ENCODE measurements at regions of chr17 and their contacts with region 1.

Region 1: DNA sequence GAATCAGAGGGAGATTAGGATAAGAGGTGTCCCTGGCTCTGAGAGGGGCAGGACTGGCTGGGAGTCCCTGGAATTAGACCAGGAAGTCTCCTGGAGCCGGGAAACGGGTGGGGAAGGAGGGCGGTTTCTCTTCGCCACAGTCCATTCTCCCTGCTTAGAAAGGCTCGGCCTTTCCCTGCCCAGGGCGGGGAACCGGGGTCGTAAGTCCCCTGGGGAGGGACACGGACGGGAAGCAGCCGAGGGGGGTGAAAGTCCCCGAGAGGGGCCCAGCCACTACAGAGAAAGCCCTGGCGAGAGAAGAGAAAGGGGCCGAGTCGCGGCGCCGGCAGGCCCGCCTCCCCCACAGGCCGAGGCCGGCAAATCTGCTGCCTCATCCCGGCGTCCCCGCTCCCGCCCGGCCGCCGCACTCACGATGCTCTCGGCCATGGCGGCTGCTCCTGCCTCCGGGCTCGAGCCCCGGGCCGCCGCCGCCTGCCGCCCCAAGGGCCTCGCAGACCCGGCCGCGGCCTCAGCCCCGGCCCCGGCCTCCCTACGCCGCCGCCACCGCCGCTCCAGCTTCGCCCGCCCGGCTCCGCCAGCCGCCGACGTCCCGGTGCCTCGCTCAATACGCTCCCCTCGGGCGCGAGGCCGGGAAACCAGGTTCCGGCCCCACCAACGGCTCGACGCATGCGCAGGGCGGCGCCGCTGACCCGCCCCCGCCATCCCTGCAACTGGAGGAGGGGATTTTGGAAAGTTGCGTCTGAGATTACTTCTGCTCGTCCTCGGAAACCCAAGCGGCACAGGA is at the starts of genes NPLOC4 and TSPAN10:
- DNase-seq: peak; percentile 80
- ATAC-seq: peak; percentile 94
- H3K4me3 ChIP-seq: peak within 1 kb of the TSS; percentile 57
- H3K27ac ChIP-seq: peak within 1 kb of the TSS; percentile 65
- H3K4me1 ChIP-seq: peaks cover 8% of the 10 kb centered on the region
- H3K27me3 ChIP-seq: no peaks in the 10 kb centered on the region
- CTCF ChIP-seq: no peak
- POLR2A ChIP-seq: peak; percentile 92
- RAD21 ChIP-seq: no peak; the same call in 1 of the 2 replicates
- total RNA-seq, gene NPLOC4: 66.1 and 70.4 TPM in 2 replicates
- total RNA-seq, gene TSPAN10: 1.1 and 1.4 TPM in 2 replicates

Region 2: DNA sequence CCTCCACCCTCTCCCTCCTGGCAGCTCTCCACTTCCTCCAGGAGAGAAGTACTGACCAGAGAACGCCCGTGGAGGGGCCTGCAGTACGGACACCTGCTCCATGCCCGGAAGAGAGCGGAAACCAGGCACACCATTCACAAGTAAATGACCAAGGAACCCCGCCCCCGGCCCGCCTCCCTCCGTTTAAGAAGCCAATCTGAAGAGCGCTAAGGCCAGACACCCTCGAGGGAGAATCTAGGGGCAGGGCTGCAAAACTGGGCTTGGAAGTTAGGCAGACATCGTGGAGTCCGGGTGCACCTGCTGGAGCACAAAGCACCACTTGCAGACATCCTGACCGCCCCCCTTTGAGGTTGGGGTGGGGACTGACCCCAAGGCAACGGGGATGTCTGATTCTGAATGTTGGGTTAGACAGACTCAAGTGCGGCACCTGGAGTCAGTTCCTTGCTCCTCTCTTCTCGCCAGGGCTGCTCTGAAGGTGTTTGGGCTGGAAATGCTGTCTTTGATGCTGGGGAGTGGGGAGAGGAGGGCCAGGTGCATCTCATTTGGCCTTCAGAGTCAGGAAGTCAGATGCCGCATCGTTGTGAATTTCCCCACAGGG is 83.6 kb before region 1 on chr17:
- CTCF ChIA-PET with region 1: no interaction called
- POLR2A ChIA-PET with region 1: no interaction called
- dilution Hi-C with region 1: no loop called
- in situ Hi-C with region 1: no loop called
- intact Hi-C with region 1: no loop called
- DNase-seq: peak; percentile 66
- ATAC-seq: peak; percentile 63
- H3K4me3 ChIP-seq: peak overlapping the region; percentile 100
- H3K27ac ChIP-seq: peak overlapping the region; percentile 77
- H3K4me1 ChIP-seq: peaks cover 22% of the 10 kb centered on the region
- H3K27me3 ChIP-seq: no peaks in the 10 kb centered on the region
- CTCF ChIP-seq: no peak
- POLR2A ChIP-seq: peak; percentile 24; the same call in 1 of the 2 replicates
- RAD21 ChIP-seq: no peak

Region 3: DNA sequence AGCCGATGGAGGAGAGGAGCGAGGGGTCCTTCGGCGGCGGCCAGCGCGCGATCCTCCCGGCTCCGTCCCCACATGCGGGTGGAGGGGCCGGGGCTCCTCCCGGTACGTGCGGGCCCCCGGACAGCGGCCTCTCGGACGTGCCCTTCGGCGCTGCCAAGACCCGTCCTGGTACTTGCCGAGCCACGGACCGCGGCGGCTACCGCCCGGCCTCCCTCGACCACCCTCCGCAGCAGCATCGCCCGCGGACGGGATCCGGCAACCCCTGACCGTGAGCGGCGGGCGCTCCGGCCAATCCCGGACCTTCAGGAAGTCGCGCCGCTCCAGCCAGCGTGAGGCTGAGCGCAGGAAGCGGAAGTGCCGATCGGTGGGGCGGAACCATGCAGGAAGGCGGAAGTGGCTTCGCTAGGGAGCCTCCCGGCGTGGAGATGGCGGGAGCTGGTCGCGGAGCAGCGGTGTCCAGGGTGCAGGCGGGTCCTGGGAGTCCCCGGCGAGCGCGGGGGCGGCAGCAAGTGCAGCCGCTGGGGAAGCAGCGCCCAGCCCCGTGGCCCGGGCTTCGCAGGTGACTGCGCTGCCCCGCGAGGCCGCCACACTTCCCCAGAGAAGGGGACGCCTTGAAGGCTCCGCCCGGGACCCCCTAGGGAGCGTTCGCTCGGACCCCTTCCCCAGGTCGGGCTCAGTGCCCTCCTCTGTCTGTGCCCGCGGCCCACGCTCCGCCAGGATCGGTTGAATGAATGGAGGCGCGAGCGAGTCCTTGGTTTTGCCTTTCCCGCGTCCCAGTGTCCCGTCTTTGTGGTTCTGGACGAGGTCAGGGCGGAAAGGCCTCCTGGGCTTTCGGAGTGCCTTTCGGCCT is 29.9 kb after region 1 on chr17 and contains the starts of genes CCDC137 and OXLD1:
- CTCF ChIA-PET with region 1: no interaction called
- POLR2A ChIA-PET with region 1: no interaction called
- dilution Hi-C with region 1: no loop called
- in situ Hi-C with region 1: no loop called
- intact Hi-C with region 1: loop called (anchors 1 kb)
- DNase-seq: peak; percentile 96
- ATAC-seq: peak; percentile 98
- H3K4me3 ChIP-seq: peak within 1 kb of the TSS; percentile 75
- H3K27ac ChIP-seq: peak within 1 kb of the TSS; percentile 79
- H3K4me1 ChIP-seq: peaks cover 10% of the 10 kb centered on the region
- H3K27me3 ChIP-seq: no peaks in the 10 kb centered on the region
- CTCF ChIP-seq: no peak
- POLR2A ChIP-seq: peak; percentile 81
- RAD21 ChIP-seq: no peak
- total RNA-seq, gene CCDC137: 7.5 and 9.2 TPM in 2 replicates
- total RNA-seq, gene OXLD1: 9.9 and 10.3 TPM in 2 replicates

Region 4: GRCh38 chr17:81684238-81684887 is 47.7 kb after region 1 on chr17:
- CTCF ChIA-PET with region 1: no interaction called
- POLR2A ChIA-PET with region 1: interaction called, 10 read pairs
- dilution Hi-C with region 1: no loop called
- in situ Hi-C with region 1: no loop called
- intact Hi-C with region 1: no loop called
- DNase-seq: peak; percentile 88
- ATAC-seq: peak; percentile 48
- H3K4me3 ChIP-seq: peak overlapping the region; percentile 59
- H3K27ac ChIP-seq: peak overlapping the region; percentile 81
- H3K4me1 ChIP-seq: peaks cover 10% of the 10 kb centered on the region
- H3K27me3 ChIP-seq: no peaks in the 10 kb centered on the region
- CTCF ChIP-seq: no peak
- POLR2A ChIP-seq: peak; percentile 92
- RAD21 ChIP-seq: no peak

Region 5: DNA sequence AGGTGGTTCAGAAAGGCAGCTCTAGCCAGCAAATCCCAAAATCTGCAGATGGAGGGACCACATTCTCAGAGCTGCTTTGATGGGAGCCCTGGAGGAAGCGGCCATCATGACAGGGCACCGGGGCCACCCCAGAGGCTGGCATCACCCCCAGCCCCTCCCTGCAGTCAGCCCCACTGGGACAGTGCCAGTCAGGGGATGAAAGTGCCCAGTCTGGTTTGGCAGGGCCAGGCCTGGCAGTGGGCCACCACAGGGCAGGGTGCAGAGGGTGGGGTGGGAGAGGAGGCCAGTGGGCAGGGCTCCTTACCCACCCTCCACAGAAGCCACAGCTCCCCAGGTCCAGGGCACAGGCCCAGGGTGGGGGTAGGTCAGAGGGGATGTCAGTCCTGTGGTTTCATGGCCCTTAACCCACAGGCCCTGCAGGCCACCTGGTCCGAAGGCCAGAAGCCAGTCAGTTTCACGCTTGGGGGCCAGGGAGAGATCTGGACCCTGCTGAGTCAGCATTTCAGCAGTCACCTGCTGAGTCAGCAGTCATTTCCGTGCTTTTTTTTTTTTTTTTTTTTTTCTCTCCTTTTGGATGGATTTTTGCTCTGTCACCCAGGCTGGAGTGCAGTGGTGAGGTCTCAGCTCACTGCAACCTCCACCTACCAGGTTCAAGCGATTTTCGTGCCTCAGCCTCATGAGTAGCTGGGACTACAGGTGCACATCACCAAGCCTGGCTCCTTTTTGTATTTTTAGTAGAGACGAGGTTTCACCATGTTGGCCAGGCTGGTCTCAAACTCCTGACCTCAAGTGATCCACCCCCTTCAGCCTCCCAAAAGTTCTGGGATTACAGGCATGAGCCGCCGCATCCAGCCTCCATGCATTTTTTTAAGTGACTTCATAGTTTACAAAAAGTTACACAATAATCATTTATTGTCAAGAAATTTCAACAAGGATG is 85.8 kb after region 1 on chr17:
- CTCF ChIA-PET with region 1: no interaction called
- POLR2A ChIA-PET with region 1: no interaction called
- dilution Hi-C with region 1: no loop called
- in situ Hi-C with region 1: no loop called
- intact Hi-C with region 1: no loop called
- DNase-seq: no peak
- ATAC-seq: peak; percentile 29
- H3K4me3 ChIP-seq: no peak overlapping the region
- H3K27ac ChIP-seq: no peak overlapping the region
- H3K4me1 ChIP-seq: no peaks in the 10 kb centered on the region
- H3K27me3 ChIP-seq: no peaks in the 10 kb centered on the region
- CTCF ChIP-seq: no peak
- POLR2A ChIP-seq: no peak
- RAD21 ChIP-seq: no peak